Activated naive CD4-positive, alpha-beta T cell treated with anti-CD3 and anti-CD28 coated beads, Interleukin-2, amount 10 ng/mL, durations not matched to agents 7 days and 5 days (primary cell): ENCODE measurements at regions of chr6 and their contacts with region 1.

Region 1: GRCh38 chr6:29649701-29650673 is 6.9 kb upstream of the MOG start:
- DNase-seq: peak; percentile 99
- H3K4me3 Mint-ChIP-seq: peak overlapping the region; percentile 86
- H3K27ac Mint-ChIP-seq: peak overlapping the region; percentile 98
- H3K4me1 Mint-ChIP-seq: peaks cover 18% of the 10 kb centered on the region
- H3K27me3 Mint-ChIP-seq: peaks cover 16% of the 10 kb centered on the region

Region 2: GRCh38 chr6:29301401-29301800 is 348.6 kb before region 1 on chr6 and contains the start of gene OR14J1:
- CTCF ChIA-PET with region 1: no interaction called
- DNase-seq: no peak
- H3K4me3 Mint-ChIP-seq: no peak within 1 kb of the TSS
- H3K27ac Mint-ChIP-seq: no peak within 1 kb of the TSS
- H3K4me1 Mint-ChIP-seq: no peaks in the 10 kb centered on the region
- H3K27me3 Mint-ChIP-seq: no peaks in the 10 kb centered on the region

Region 3: DNA sequence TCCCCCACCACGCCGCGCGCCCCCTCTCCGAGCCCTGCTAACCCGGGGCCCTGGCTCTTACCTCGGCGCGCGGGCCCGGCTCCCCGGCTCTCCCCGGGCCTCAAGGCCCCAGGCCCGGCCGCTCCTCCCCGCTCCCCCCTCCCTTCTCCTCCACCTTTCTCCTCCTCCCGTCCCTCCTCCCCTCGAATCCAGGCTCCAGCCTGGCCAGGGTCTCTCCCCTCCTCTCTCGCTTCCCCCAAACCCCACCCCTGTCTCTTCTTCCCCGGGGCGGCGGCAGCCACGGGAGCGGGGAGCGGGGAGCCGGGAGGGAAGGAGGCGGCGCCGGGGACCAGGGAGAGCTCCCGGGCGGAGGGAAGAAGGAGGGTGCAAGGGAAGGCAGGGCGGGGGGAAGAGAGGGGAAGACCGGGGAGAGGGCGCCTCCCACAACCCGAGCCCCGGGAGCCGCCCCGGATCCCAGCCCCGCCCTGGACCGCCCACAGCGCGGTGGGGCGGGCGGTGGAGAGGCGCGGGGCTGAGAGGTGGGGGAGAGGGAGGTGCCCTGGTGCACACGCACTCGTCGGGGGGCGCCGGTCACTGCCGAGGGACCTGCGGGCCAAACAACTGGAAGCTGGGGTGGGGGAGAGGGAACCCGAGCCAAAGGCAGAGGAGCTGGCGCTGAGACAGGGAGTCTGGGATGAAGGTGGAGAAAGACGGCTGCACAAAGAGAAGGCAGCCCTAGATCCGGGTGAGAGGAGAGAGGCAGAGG is 17.0 kb before region 1 on chr6 and contains the start of gene GABBR1:
- CTCF ChIA-PET with region 1: interaction called, 14 read pairs
- DNase-seq: peak; percentile 86
- H3K4me3 Mint-ChIP-seq: peak within 1 kb of the TSS; percentile 79
- H3K27ac Mint-ChIP-seq: peak within 1 kb of the TSS; percentile 9
- H3K4me1 Mint-ChIP-seq: peaks cover 55% of the 10 kb centered on the region
- H3K27me3 Mint-ChIP-seq: peaks cover 78% of the 10 kb centered on the region

Region 4: GRCh38 chr6:29665942-29666825 is 16.2 kb after region 1 on chr6:
- CTCF ChIA-PET with region 1: interaction called, 63 read pairs
- DNase-seq: no peak
- H3K4me3 Mint-ChIP-seq: no peak overlapping the region
- H3K27ac Mint-ChIP-seq: no peak overlapping the region
- H3K4me1 Mint-ChIP-seq: no peaks in the 10 kb centered on the region
- H3K27me3 Mint-ChIP-seq: peaks cover 63% of the 10 kb centered on the region

Region 5: GRCh38 chr6:29696155-29697125 is 46.5 kb after region 1 on chr6:
- CTCF ChIA-PET with region 1: interaction called, 24 read pairs
- DNase-seq: peak; percentile 34
- H3K4me3 Mint-ChIP-seq: no peak overlapping the region
- H3K27ac Mint-ChIP-seq: no peak overlapping the region
- H3K4me1 Mint-ChIP-seq: no peaks in the 10 kb centered on the region
- H3K27me3 Mint-ChIP-seq: peaks cover 39% of the 10 kb centered on the region

Region 6: GRCh38 chr6:29834564-29835436 is 184.8 kb after region 1 on chr6:
- CTCF ChIA-PET with region 1: interaction called, 24 read pairs
- DNase-seq: peak; percentile 70
- H3K4me3 Mint-ChIP-seq: no peak overlapping the region
- H3K27ac Mint-ChIP-seq: no peak overlapping the region
- H3K4me1 Mint-ChIP-seq: peaks cover 8% of the 10 kb centered on the region
- H3K27me3 Mint-ChIP-seq: peaks cover 66% of the 10 kb centered on the region